Right ventricle myocardium superior (tissue), 1 donor: ENCODE measurements at regions of chr6 and their contacts with region 1.

Region 1: GRCh38 chr6:107489636-107490565 is at the start of gene SOBP:
- DNase-seq: peak; percentile 78
- ATAC-seq: peak; percentile 58
- total RNA-seq, gene SOBP: 15.6 TPM

Region 2: GRCh38 chr6:106574741-106575458 is 915.0 kb before region 1 on chr6:
- intact Hi-C with region 1: no loop called
- DNase-seq: no peak
- ATAC-seq: no peak

Region 3: GRCh38 chr6:107202846-107203468 is 286.9 kb before region 1 on chr6:
- intact Hi-C with region 1: no loop called
- DNase-seq: no peak
- ATAC-seq: no peak

Region 4: DNA sequence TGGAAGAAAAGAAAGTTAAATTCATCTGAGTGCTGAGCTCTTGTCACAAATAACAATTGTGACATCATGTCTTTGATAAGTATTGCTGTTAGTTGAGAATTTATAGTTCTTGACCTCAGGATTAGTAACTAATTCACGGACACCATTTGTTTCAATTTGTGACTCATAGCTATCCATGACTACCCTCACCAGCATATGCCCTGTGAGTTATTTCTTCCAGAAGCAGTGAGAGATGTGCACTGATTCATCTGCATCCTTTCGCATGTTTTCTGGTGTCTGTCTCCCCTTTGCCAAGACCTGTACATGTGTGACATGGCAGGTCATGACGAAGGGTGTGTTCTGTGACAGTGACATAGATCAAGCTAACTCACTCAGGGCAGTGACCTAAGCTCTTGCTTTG is 87.0 kb after region 1 on chr6:
- intact Hi-C with region 1: no loop called
- DNase-seq: no peak
- ATAC-seq: no peak

Region 5: GRCh38 chr6:107657755-107658461 is 168.0 kb after region 1 on chr6:
- intact Hi-C with region 1: loop called (anchors 10 kb)
- DNase-seq: peak; percentile 55
- ATAC-seq: peak; percentile 8